Aorta (tissue), 5 donors: ENCODE measurements at regions of chr5 and their contacts with region 1.

Region 1: DNA sequence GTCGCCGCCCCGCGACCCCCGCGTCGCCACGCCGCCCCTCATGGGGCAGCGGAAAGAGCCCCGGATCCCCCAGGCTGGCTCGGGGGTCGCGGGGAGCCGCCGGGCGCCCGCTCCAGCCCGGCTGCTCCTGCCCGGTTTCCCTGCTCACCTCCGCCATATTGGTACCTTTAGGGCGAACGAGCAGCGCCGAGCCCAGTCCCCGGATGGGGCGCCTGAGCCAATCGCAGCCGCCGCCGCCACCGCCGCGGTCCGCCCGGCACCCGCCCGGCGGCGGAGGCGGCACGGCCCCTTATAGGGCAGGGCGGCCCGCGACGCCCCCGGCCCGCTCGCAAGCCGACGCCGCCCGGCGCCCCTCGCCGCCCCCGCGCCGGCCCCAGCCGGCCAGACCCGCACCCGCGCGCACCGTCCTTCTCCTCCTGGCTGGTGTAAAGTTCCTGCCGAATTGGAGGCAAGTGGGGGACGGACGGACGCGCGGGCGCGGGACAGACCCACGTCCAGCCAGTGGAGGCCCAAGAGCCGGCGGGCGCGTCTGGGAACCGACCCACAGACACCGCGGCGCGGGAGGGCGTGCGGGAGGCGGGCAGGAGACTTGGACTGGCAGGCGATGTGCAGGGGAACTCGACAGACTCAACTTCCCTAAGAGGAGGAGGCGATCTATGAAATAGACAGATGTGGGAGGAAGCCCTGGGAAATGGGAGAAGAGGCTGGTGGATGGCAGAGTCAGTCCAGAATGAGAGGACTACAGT is at the start of gene MIER3:
- DNase-seq: peak; percentile 86 to 94
- ATAC-seq: peak; percentile 93
- H3K4me3 ChIP-seq: peak within 1 kb of the TSS; percentile 96
- H3K27ac ChIP-seq: peak within 1 kb of the TSS; percentile 82 to 98
- H3K4me1 ChIP-seq: no peaks in the 10 kb centered on the region
- H3K27me3 ChIP-seq: no peaks in the 10 kb centered on the region
- total RNA-seq, gene MIER3: 20.7 to 27.2 TPM

Region 2: DNA sequence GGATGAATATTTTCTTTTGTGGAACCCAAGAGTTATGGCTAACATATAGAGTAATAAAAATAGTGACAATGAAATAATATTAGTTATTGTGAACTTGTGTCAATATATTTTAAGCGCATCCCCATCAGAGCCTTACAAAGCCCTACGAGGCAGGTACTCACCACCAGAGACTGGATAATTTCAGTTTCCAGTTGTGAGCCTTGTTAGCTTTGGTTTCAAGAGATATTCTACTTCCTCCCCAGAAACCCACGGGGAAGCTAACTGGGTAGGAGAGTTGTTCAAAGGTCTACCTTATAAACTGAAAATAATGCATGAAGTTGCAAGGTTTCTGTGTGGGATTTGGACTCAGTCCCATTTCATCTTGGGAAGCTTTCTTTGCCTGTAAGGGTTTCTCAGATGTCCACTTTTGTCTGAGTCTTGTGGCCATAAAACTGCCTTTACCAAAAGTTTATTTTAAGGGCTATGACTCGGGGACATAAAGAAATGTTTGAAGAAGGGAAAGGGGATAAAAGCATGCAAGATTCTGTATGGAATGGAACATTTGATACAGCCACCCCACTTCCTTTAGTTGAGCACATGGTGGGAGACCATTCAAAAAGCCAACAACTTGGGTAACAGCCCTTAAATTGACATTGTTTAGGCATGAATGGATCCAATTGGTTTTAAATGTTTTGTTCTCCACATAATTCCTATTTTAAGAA is 661.6 kb before region 1 on chr5:
- intact Hi-C with region 1: no loop called
- DNase-seq: no peak
- ATAC-seq: no peak
- H3K4me3 ChIP-seq: no peak overlapping the region
- H3K27ac ChIP-seq: no peak overlapping the region
- H3K4me1 ChIP-seq: no peaks in the 10 kb centered on the region
- H3K27me3 ChIP-seq: no peaks in the 10 kb centered on the region

Region 3: DNA sequence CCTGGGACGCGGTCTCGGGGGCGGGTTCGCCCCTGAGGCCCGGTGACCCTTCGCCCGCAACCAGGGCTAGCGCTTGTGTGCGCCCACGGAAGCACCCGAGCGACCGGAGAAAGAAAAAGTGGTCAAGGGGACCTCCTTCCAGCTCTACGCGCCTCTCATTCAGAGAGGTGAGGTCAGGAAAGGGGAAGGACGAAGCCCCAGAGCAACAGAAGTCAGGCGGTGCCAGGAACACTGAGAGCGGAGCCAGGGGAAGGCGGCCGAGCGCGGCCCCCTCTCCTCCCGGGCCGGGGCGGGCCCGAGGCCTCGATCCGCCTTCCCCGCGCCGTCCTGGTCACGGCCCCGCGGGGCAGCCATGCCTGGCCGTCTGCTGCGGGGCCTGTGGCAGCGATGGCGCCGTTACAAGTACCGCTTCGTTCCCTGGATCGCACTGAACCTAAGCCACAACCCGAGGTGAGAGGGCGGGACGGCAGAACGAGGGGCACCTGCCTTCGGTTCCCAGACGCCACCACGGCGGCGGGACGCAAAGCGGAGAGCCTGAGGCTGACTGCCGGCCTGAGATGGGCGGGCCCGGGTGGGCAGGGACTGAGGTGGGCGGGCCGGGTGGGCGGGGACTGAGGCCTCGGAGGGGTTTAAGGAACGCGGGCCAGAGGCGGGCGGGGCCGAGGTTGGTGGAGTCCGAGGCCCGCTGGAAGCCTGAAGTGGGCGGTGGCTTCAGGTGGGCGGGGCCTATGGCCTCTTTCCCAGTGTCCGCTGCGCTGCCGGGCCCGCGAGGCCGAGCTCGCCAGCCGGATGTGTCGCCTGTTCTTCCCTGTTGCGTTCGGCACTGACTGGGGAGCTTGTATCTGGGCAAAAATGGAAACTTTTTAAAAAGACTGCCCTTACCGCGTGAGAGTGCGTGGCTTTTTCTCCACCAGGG is 42.6 kb before region 1 on chr5 and contains the start of gene SETD9:
- intact Hi-C with region 1: loop called (anchors 2 to 5 kb)
- DNase-seq: peak; percentile 99 to 100
- ATAC-seq: peak; percentile 99
- H3K4me3 ChIP-seq: peak within 1 kb of the TSS; percentile 65 to 70
- H3K27ac ChIP-seq: peak within 1 kb of the TSS; percentile 38 to 96
- H3K4me1 ChIP-seq: no peaks in the 10 kb centered on the region
- H3K27me3 ChIP-seq: no peaks in the 10 kb centered on the region
- total RNA-seq, gene SETD9: 8.1 to 8.6 TPM

Region 4: GRCh38 chr5:57173185-57174127 is 221.3 kb after region 1 on chr5 and contains the start of gene GPBP1:
- intact Hi-C with region 1: loop called in 1 of 2 experiments (anchors 5 kb)
- DNase-seq: peak; percentile 100
- ATAC-seq: peak; percentile 98
- H3K4me3 ChIP-seq: peak within 1 kb of the TSS; percentile 60 to 80
- H3K27ac ChIP-seq: peak within 1 kb of the TSS; percentile 70 to 78
- H3K4me1 ChIP-seq: no peaks in the 10 kb centered on the region
- H3K27me3 ChIP-seq: no peaks in the 10 kb centered on the region
- total RNA-seq, gene GPBP1: 63.0 to 79.0 TPM

Region 5: GRCh38 chr5:57221049-57221568 is 269.0 kb after region 1 on chr5:
- intact Hi-C with region 1: loop called (anchors 5 kb)
- DNase-seq: no peak
- ATAC-seq: peak; percentile 78
- H3K4me3 ChIP-seq: no peak overlapping the region
- H3K27ac ChIP-seq: no peak overlapping the region
- H3K4me1 ChIP-seq: no peaks in the 10 kb centered on the region
- H3K27me3 ChIP-seq: no peaks in the 10 kb centered on the region

Region 6: GRCh38 chr5:58071566-58071965 is 1119.4 kb after region 1 on chr5:
- intact Hi-C with region 1: no loop called
- DNase-seq: no peak
- ATAC-seq: peak; percentile 43
- H3K4me3 ChIP-seq: no peak overlapping the region
- H3K27ac ChIP-seq: no peak overlapping the region
- H3K4me1 ChIP-seq: no peaks in the 10 kb centered on the region
- H3K27me3 ChIP-seq: no peaks in the 10 kb centered on the region